WTC11 (cell line): ENCODE measurements at regions of chr3 and their contacts with region 1.

Region 1: DNA sequence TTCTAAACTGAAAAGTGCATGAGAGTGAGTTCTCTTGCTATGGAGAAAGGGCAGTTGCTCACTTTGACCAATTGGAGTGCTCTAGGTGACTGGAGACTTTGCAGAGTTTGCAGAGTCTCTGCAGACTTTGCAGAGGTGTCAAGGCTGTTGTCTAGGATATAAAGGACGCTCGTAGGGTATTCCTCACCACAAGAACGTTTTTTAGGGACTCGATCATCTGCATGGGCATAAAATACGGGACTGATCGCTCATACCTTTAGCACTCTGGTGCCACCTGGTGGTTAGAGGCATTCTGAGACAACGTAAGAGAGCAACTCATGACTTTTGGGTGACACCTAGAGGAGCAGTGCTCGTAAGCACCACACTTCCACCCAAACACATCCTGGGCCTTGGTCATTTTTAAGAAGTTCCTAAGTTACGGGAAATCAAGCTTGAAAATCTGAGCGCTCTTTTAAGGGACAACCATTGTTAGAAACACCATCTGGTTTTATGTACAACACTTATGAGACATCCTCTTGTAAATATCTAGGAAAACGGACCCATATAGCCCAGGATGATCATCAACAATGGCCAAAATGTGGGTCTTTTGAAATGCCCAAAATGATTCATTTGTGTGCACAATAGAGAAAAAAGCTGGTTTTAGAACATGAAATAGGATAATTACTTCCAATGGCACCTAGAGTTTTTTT is 51.6 kb upstream of the XCR1 start:
- DNase-seq: peak; percentile 94
- ATAC-seq: peak; percentile 99
- H3K4me3 Mint-ChIP-seq: peak overlapping the region; percentile 52
- H3K27ac Mint-ChIP-seq: no peak overlapping the region
- H3K4me1 Mint-ChIP-seq: no peaks in the 10 kb centered on the region
- H3K27me3 Mint-ChIP-seq: peaks cover 10% of the 10 kb centered on the region; the same call in 1 of the 2 replicates
- CTCF ChIP-seq: peak; percentile 68; the same call in 1 of the 2 replicates

Region 2: DNA sequence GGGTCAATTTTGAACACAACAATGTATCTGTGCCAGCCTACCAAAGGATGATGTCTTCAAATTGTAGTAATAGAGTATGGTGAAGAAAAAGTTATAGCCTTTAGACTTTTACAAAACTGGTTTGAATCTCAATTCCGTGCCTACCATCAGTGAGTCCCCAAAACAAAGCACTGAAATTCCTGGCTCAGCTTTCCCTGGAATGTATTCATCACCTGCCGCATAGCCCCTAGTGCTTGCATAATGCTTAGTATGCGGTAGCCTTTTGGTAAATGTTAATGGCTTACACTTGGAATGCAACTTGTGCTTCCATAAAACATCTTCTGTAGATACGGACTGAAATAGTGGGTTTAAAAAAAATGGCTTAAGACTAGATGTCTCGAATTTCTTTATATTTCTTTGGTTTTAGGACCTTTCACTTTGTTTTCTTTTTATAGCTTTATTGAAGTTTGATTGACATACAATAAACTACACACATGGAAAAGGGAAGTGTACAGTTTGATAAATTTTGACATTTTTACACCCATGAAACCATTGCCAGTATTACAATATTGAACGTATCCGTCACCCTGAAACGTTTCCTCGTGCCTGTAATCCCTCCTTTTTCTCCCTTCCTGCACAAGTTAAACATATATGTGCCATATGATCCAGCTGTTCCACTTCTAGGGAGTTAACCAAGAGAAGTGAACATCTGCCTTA is 377.5 kb before region 1 on chr3:
- CTCF ChIA-PET with region 1: no interaction called
- POLR2A ChIA-PET with region 1: no interaction called
- DNase-seq: peak; percentile 56
- ATAC-seq: peak; percentile 94
- H3K4me3 Mint-ChIP-seq: peak overlapping the region; percentile 53
- H3K27ac Mint-ChIP-seq: peak overlapping the region; percentile 94
- H3K4me1 Mint-ChIP-seq: peaks cover 60% of the 10 kb centered on the region
- H3K27me3 Mint-ChIP-seq: no peaks in the 10 kb centered on the region
- CTCF ChIP-seq: no peak

Region 3: GRCh38 chr3:45938864-45939263 is 140.0 kb before region 1 on chr3:
- CTCF ChIA-PET with region 1: interaction called, 29 read pairs
- POLR2A ChIA-PET with region 1: no interaction called
- DNase-seq: peak; percentile 81
- ATAC-seq: peak; percentile 91
- H3K4me3 Mint-ChIP-seq: no peak overlapping the region
- H3K27ac Mint-ChIP-seq: 0 out of 2 replicates have a peak overlapping the region, but pooled peaks have one; percentile 6
- H3K4me1 Mint-ChIP-seq: peaks cover 17% of the 10 kb centered on the region
- H3K27me3 Mint-ChIP-seq: no peaks in the 10 kb centered on the region
- CTCF ChIP-seq: peak; percentile 77

Region 4: GRCh38 chr3:45968706-45969105 is 110.2 kb before region 1 on chr3:
- CTCF ChIA-PET with region 1: interaction called, 14 read pairs
- POLR2A ChIA-PET with region 1: no interaction called
- DNase-seq: no peak
- ATAC-seq: no peak
- H3K4me3 Mint-ChIP-seq: no peak overlapping the region
- H3K27ac Mint-ChIP-seq: no peak overlapping the region
- H3K4me1 Mint-ChIP-seq: no peaks in the 10 kb centered on the region
- H3K27me3 Mint-ChIP-seq: no peaks in the 10 kb centered on the region
- CTCF ChIP-seq: no peak

Region 5: DNA sequence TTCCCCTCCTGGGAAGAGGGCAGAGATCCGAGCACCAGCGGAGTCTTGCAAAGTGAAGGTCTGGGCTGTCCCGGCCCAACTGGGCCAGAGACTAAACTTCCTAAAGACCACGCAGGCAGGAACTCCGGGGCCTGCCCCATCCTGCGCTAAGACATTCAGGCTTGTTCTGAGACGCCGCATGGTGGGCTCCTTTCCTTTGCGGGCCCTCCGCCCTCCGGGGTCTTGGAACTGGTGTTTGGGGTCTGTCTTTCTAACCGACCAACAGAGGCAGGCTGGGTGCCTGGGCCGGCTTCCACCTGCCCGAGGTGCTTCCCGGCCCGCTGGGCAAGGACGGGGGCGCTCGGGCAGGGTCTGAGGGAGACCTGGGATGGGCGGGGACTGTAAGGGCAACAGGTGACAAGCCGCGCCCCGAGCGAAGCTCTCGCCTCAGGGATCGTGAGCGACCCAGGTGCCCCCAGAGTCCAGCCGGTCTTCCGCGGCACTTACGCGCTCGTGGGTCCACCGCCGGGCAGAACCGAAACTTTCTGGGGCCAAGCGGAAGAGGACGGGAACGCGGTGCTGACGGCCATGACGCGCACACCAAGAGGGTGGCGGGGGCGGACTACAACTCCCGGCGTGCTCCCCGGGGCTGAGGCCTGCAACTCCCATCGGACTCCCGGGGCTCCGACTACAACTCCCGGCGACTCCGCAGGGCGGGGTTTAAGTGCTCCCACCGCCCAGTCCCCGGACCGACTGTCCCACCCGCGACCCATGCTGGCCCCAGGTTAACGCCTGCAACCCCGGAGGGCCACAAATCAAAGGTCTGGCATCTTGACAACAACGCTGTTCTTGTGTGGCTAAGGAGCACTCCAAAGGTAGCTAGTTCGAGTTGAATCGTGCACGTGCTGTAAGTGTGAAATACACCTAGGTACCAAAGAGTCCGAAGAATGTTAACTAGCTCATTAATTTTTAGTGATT is 83.3 kb before region 1 on chr3 and contains the start of gene FYCO1:
- CTCF ChIA-PET with region 1: interaction called, 13 read pairs
- POLR2A ChIA-PET with region 1: no interaction called
- DNase-seq: peak; percentile 94
- ATAC-seq: peak; percentile 88
- H3K4me3 Mint-ChIP-seq: peak within 1 kb of the TSS; percentile 81
- H3K27ac Mint-ChIP-seq: peak within 1 kb of the TSS; percentile 49; the same call in 1 of the 2 replicates
- H3K4me1 Mint-ChIP-seq: peaks cover 42% of the 10 kb centered on the region
- H3K27me3 Mint-ChIP-seq: peaks cover 15% of the 10 kb centered on the region
- CTCF ChIP-seq: no peak
- total RNA-seq, gene FYCO1: 12.1 to 13.9 TPM (median 12.8 TPM) in 3 replicates

Region 6: GRCh38 chr3:46006238-46007032 is 72.4 kb before region 1 on chr3:
- CTCF ChIA-PET with region 1: no interaction called
- POLR2A ChIA-PET with region 1: no interaction called
- DNase-seq: no peak
- ATAC-seq: no peak
- H3K4me3 Mint-ChIP-seq: no peak overlapping the region
- H3K27ac Mint-ChIP-seq: no peak overlapping the region
- H3K4me1 Mint-ChIP-seq: peaks cover 28% of the 10 kb centered on the region
- H3K27me3 Mint-ChIP-seq: no peaks in the 10 kb centered on the region; the same call in 1 of the 2 replicates
- CTCF ChIP-seq: no peak

Region 7: GRCh38 chr3:46368569-46368968 is 289.7 kb after region 1 on chr3:
- CTCF ChIA-PET with region 1: interaction called, 11 read pairs
- POLR2A ChIA-PET with region 1: no interaction called
- DNase-seq: peak; percentile 59
- ATAC-seq: peak; percentile 98
- H3K4me3 Mint-ChIP-seq: no peak overlapping the region
- H3K27ac Mint-ChIP-seq: no peak overlapping the region
- H3K4me1 Mint-ChIP-seq: no peaks in the 10 kb centered on the region
- H3K27me3 Mint-ChIP-seq: peaks cover 2% of the 10 kb centered on the region; the same call in 1 of the 2 replicates
- CTCF ChIP-seq: no peak